Activated CD8-positive, alpha-beta memory T cell treated with anti-CD3 and anti-CD28 coated beads, Interleukin-2, amount 10 ng/mL, durations not matched to agents 7 days and 5 days (primary cell): ENCODE measurements at regions of chr20 and their contacts with region 1.

Region 1: GRCh38 chr20:48657475-48658470 is 170.0 kb downstream of the PREX1 start:
- DNase-seq: peak; percentile 75
- ATAC-seq: peak; percentile 83
- H3K4me3 Mint-ChIP-seq: no peak overlapping the region
- H3K27ac Mint-ChIP-seq: peak overlapping the region; percentile 27
- H3K4me1 Mint-ChIP-seq: peaks cover 12% of the 10 kb centered on the region
- H3K27me3 Mint-ChIP-seq: no peaks in the 10 kb centered on the region

Region 2: DNA sequence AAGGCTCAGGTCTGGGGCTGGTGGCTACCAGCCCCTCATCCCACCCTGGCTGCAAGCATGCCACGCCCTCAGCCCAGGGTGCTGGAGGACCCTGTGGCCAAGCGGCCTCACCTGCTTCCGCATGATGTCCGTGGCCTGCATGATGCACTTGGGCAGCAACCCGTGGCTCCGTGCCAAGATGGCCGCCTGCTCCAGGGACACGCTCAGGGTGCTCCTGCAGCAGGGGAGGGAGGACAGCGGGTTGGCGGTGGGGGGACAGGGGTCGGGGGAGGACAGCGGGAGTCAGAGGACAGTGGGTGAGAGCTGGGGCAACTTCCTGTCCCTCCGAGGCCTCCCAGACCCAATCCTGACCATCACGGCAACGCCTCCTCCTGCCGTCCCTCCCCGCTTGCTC is 30.0 kb before region 1 on chr20:
- CTCF ChIA-PET with region 1: no interaction called
- DNase-seq: no peak
- ATAC-seq: no peak
- H3K4me3 Mint-ChIP-seq: no peak overlapping the region
- H3K27ac Mint-ChIP-seq: no peak overlapping the region
- H3K4me1 Mint-ChIP-seq: peaks cover 2% of the 10 kb centered on the region
- H3K27me3 Mint-ChIP-seq: no peaks in the 10 kb centered on the region

Region 3: GRCh38 chr20:48682529-48683251 is 24.9 kb after region 1 on chr20:
- CTCF ChIA-PET with region 1: interaction called, 16 read pairs
- DNase-seq: no peak
- ATAC-seq: no peak
- H3K4me3 Mint-ChIP-seq: no peak overlapping the region
- H3K27ac Mint-ChIP-seq: no peak overlapping the region
- H3K4me1 Mint-ChIP-seq: peaks cover 11% of the 10 kb centered on the region
- H3K27me3 Mint-ChIP-seq: no peaks in the 10 kb centered on the region

Region 4: DNA sequence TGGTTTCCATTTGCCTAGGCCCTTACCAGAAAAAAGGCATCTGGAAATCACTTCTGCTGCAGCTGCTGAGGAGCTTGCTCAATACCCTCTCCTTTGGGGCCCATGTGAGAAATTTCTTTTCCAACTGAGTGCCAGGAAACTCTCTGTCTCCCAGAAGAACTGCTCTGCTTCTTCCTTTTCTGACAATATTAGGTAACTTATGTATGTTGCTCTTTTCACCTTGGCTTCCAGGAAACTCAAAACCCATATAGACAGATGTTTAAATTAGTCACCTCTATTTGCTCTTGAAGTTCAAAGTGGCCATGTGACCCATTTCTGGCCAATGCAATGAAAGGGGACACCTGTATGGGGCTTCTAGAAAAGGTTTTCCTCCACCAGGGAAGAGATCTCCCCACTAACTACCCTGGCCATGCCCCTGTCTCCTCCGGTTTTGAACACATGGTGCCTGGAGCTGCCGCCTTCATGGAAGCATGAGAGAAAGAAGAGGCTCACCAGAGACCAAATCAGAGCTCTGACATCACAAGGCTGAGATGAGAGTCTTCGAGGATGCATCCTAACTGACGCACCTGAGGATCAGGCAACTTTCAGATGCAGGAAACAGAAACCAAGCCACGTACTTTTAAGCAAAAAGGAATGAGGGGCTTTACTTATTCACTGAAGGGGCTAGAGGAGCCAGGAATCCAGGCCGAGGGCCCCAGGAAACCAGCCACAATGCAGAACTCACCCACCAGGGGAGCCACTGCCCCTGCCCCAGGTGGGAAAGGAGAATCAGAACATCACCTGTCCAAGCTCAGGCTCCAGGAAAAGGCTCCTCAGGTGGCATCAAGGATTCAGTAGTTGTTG is 48.6 kb after region 1 on chr20:
- CTCF ChIA-PET with region 1: interaction called, 10 read pairs
- DNase-seq: no peak
- ATAC-seq: peak; percentile 16
- H3K4me3 Mint-ChIP-seq: no peak overlapping the region
- H3K27ac Mint-ChIP-seq: peak overlapping the region; percentile 75
- H3K4me1 Mint-ChIP-seq: peaks cover 50% of the 10 kb centered on the region
- H3K27me3 Mint-ChIP-seq: no peaks in the 10 kb centered on the region

Region 5: DNA sequence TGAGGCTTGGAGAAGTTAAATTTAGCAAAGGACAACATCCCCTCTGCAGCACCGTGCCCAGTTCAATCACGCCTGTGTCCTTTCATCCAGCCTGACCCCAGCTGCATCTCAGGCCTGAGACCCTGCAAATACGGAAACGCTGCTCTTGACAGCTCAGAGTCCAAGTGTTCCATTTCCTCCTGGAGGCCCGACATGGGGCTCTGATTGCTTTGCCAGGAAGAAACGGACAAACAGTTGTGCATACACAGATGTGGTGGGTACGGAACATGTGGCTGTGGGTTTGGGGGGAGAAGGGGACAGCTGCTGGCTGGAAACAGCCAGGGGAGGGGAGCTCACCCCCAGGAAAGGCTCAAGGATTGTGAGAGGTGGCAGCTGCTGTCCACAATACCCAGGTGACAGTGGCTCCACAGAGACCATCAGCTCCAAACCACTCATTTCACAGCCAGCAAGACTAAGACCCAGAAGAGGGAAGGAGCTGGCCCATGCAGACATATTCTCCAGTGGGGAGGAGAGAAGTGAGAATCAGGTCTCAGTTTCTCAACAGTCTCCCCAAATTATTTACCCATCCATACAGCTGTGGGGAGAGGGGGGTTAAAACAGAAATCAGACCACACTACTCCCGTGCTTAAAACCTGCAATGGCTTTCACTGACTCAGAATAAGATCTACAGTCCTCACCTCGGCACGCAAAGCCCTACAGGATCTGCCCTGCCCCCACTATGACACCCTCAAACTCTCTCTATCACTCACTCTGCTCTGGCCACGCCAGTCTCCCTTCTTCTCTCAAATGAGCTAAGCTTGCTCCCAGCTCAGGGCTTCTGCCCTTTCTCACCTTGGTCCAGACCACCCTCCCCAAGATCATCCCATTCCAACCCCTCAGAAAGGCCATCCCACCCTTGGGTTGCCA is 80.9 kb after region 1 on chr20:
- CTCF ChIA-PET with region 1: interaction called, 11 read pairs
- DNase-seq: peak; percentile 94
- ATAC-seq: peak; percentile 88
- H3K4me3 Mint-ChIP-seq: peak overlapping the region; percentile 49
- H3K27ac Mint-ChIP-seq: peak overlapping the region; percentile 94
- H3K4me1 Mint-ChIP-seq: peaks cover 64% of the 10 kb centered on the region
- H3K27me3 Mint-ChIP-seq: no peaks in the 10 kb centered on the region

Region 6: GRCh38 chr20:48904365-48905296 is 246.9 kb after region 1 on chr20:
- CTCF ChIA-PET with region 1: interaction called, 118 read pairs
- DNase-seq: peak; percentile 84
- ATAC-seq: peak; percentile 58
- H3K4me3 Mint-ChIP-seq: no peak overlapping the region
- H3K27ac Mint-ChIP-seq: no peak overlapping the region
- H3K4me1 Mint-ChIP-seq: peaks cover 30% of the 10 kb centered on the region
- H3K27me3 Mint-ChIP-seq: peaks cover 4% of the 10 kb centered on the region